Mammary epithelial cell (primary cell): ENCODE measurements at regions of chr20 and their contacts with region 1.

Region 1: DNA sequence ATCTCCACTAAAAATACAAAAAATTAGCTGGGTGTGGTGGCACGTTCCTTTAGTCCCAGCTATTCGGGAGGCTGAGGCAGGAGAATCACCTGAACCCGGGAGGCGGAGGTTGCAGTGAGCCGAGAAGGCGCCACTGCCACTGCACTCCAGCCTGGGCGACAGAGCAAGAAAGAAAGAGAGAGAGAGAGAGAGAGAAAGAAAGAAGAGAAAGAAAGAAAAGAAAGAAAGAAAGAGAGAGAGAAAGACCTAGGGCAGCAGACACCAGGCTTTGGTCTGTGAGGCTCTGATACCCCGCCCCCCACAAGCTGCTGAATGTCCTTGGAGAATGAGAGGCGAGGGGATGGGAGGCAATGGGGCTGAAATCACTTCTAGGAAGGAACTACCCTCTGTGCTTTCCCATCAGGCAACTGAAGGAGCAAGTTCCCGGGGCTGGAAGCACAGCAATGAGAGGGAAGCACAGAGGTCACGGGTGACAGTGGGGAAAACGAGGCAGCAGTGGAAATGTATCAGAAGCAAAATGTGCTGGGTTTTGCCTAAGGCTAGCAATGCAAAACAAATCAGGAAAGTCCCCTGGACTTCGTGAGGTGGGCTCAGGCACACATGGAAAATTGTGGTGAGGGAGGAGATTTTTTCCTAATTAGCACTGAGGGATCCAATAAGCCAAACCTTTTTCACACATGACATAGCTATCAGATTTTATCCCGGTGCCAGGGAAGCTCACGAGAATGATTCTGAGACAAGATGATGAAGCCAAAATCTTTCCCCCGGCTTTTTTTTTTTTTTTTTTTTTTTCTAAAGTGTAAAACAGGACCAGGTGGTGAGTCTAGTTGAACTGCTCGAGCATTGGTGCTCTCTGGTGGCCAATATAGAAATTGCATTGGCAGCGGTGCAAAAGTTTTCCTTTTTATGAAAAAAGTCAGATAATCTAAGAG is 16.9 kb upstream of the ARFGEF2 start:
- DNase-seq: peak; percentile 40
- H3K4me3 ChIP-seq: no peak overlapping the region
- H3K27ac ChIP-seq: no peak overlapping the region
- H3K4me1 ChIP-seq: no peaks in the 10 kb centered on the region
- H3K27me3 ChIP-seq: no peaks in the 10 kb centered on the region
- CTCF ChIP-seq: peak; percentile 82 to 86

Region 2: GRCh38 chr20:48635433-48636310 is 269.0 kb before region 1 on chr20:
- CTCF ChIA-PET with region 1: no interaction called
- dilution Hi-C with region 1: no loop called
- in situ Hi-C with region 1: no loop called
- intact Hi-C with region 1: loop called (anchors 1 kb)
- DNase-seq: peak; percentile 26
- H3K4me3 ChIP-seq: no peak overlapping the region
- H3K27ac ChIP-seq: no peak overlapping the region
- H3K4me1 ChIP-seq: no peaks in the 10 kb centered on the region
- H3K27me3 ChIP-seq: no peaks in the 10 kb centered on the region
- CTCF ChIP-seq: peak; percentile 89 to 91

Region 3: DNA sequence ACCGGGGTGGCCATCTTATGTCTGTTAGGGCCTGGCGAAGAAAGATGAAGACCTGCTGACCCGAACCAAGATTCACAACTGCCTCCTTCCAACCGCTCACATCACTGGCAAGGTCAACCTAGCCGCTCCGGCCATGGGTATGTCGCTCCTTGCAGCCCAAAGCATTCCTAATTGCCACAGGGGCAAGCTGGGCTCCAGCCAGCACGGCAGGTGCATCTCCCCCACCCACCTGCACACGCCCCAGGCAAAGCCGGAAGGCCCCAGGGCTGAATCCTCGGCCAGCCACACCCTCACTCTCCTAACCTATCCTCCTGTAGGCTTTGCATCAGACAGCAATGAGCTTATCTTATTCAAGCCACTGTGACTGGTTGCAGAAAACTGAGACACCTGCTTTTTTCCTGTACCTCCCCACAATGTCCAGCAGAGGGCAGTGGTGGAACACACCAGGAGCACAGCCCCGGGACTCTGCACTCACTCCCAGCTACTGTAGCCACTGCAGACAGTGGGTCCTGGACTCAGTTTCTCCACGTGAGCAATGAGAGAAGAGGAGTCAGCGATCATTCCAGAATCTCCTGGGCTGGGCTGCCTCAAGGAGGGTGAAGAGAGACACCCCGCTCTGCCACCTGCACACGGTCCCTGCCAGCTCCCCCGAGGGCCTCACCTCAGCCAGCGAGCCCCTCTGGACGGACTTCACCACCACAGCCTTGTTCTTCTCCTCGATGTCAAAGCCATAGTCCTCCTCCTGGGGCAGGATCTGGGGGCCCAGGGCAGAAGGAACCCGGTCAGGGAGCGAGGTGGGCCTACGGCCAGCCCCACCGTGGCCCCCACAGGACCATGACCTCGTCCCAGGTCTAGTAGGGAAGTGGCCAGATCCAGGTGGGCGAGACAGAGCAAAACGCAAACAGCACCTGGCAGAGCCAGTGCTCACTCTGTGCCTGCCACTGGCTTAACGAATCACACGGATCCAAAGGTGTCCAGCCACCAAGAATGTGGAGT is 246.9 kb before region 1 on chr20:
- CTCF ChIA-PET with region 1: interaction called, 19 read pairs
- dilution Hi-C with region 1: loop called (anchors 10 kb)
- in situ Hi-C with region 1: loop called (anchors 5 kb)
- intact Hi-C with region 1: loop called (anchors 1 kb)
- DNase-seq: peak; percentile 54
- H3K4me3 ChIP-seq: no peak overlapping the region
- H3K27ac ChIP-seq: no peak overlapping the region
- H3K4me1 ChIP-seq: no peaks in the 10 kb centered on the region
- H3K27me3 ChIP-seq: no peaks in the 10 kb centered on the region
- CTCF ChIP-seq: peak; percentile 81 to 92

Region 4: GRCh38 chr20:48853591-48854443 is 50.8 kb before region 1 on chr20:
- CTCF ChIA-PET with region 1: interaction called, 19 read pairs
- dilution Hi-C with region 1: no loop called
- in situ Hi-C with region 1: no loop called
- intact Hi-C with region 1: no loop called
- DNase-seq: no peak
- H3K4me3 ChIP-seq: no peak overlapping the region
- H3K27ac ChIP-seq: no peak overlapping the region
- H3K4me1 ChIP-seq: no peaks in the 10 kb centered on the region
- H3K27me3 ChIP-seq: peaks cover 5% of the 10 kb centered on the region
- CTCF ChIP-seq: no peak

Region 5: GRCh38 chr20:48986899-48987298 is 82.3 kb after region 1 on chr20:
- CTCF ChIA-PET with region 1: no interaction called
- dilution Hi-C with region 1: no loop called
- in situ Hi-C with region 1: no loop called
- intact Hi-C with region 1: no loop called
- DNase-seq: no peak
- H3K4me3 ChIP-seq: no peak overlapping the region
- H3K27ac ChIP-seq: no peak overlapping the region
- H3K4me1 ChIP-seq: peaks cover 12% of the 10 kb centered on the region
- H3K27me3 ChIP-seq: no peaks in the 10 kb centered on the region
- CTCF ChIP-seq: peak; percentile 24 to 53